ENCODE measurements at regions of chr1 and their contacts with region 1.

Region 1: DNA sequence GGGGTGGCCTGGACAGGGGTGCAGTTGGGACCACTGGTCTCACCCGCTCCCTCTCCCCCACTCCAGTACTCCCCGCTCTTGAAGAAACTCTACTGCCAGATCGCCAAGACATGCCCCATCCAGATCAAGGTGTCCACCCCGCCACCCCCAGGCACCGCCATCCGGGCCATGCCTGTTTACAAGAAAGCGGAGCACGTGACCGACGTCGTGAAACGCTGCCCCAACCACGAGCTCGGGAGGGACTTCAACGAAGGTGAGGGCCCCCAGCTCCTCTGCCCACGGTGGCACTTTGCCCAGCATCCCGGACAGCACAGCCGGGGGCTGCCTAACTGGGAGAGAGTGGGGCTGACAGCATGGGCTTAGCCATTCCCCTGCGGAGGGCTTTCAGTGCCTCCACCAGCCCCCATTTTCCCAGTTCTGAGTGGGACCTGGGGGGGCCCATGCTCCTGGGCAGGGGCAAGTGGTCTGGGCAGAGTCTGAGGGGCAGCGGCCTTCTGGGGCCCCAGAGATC is 30.2 kb upstream of the CCDC27 start:
- DNase-seq: no peak
- H3K4me3 ChIP-seq: no peak overlapping the region
- H3K27ac ChIP-seq: no peak overlapping the region
- H3K27me3 ChIP-seq: peaks cover 0 to 6% (median 0%) of the 10 kb centered on the region in 45 donors
- CTCF ChIP-seq: no peak

Region 2: GRCh38 chr1:3624200-3625136 is 97.5 kb before region 1 on chr1 and contains the start of gene TPRG1L:
- intact Hi-C with region 1: loop called in 1 of 2 experiments (anchors 5 kb)
- DNase-seq: peak; percentile 97 to 100 (median 98)
- H3K4me3 ChIP-seq: peak within 1 kb of the TSS; percentile 72 to 100 (median 97)
- H3K27ac ChIP-seq: peak within 1 kb of the TSS in 53 of 59 donors; percentile 36 to 93 (median 81)
- H3K27me3 ChIP-seq: no peaks in the 10 kb centered on the region
- CTCF ChIP-seq: peak in 18 of 56 donors; percentile 7 to 40 (median 20)
- total RNA-seq, gene TPRG1L: 52.0 to 163 (median 121) TPM

Measured in dorsolateral prefrontal cortex (tissue), 120 donors.